MCF 10A (cell line): ENCODE measurements at regions of chr10 and their contacts with region 1.

Region 1: GRCh38 chr10:34299105-34299611 is 515.9 kb downstream of the PARD3 start:
- DNase-seq: peak; percentile 26
- H3K4me3 Mint-ChIP-seq: no peak overlapping the region
- H3K27ac Mint-ChIP-seq: peak overlapping the region; percentile 64
- H3K4me1 Mint-ChIP-seq: peaks cover 13% of the 10 kb centered on the region
- H3K27me3 Mint-ChIP-seq: no peaks in the 10 kb centered on the region
- CTCF ChIP-seq: no peak

Region 2: GRCh38 chr10:33193057-33193700 is 1106.0 kb before region 1 on chr10:
- CTCF ChIA-PET with region 1: interaction called, 5 read pairs
- POLR2A ChIA-PET with region 1: no interaction called
- intact Hi-C with region 1: loop called (anchors 10 kb)
- DNase-seq: peak; percentile 92
- H3K4me3 Mint-ChIP-seq: peak overlapping the region; percentile 47
- H3K27ac Mint-ChIP-seq: peak overlapping the region; percentile 52
- H3K4me1 Mint-ChIP-seq: peaks cover 20% of the 10 kb centered on the region
- H3K27me3 Mint-ChIP-seq: no peaks in the 10 kb centered on the region
- CTCF ChIP-seq: peak; percentile 75

Region 3: GRCh38 chr10:34599026-34599795 is 300.1 kb after region 1 on chr10:
- CTCF ChIA-PET with region 1: no interaction called
- POLR2A ChIA-PET with region 1: no interaction called
- intact Hi-C with region 1: no loop called
- DNase-seq: no peak
- H3K4me3 Mint-ChIP-seq: no peak overlapping the region
- H3K27ac Mint-ChIP-seq: no peak overlapping the region
- H3K4me1 Mint-ChIP-seq: peaks cover 10% of the 10 kb centered on the region
- H3K27me3 Mint-ChIP-seq: no peaks in the 10 kb centered on the region
- CTCF ChIP-seq: no peak